ENCODE measurements at regions of chr11 and their contacts with region 1.

Region 1: GRCh38 chr11:100220801-100221200 is 466.3 kb upstream of the ARHGAP42 start:
- DNase-seq: no peak
- H3K4me3 ChIP-seq: no peak overlapping the region
- H3K27ac ChIP-seq: no peak overlapping the region
- H3K4me1 ChIP-seq: no peaks in the 10 kb centered on the region
- H3K27me3 ChIP-seq: no peaks in the 10 kb centered on the region
- CTCF ChIP-seq: no peak

Region 2: GRCh38 chr11:100151944-100152343 is 68.9 kb before region 1 on chr11:
- CTCF ChIA-PET with region 1: no interaction called
- POLR2A ChIA-PET with region 1: interaction called, 10 read pairs
- intact Hi-C with region 1: no loop called
- DNase-seq: peak in 1 of 2 experiments; percentile 26
- H3K4me3 ChIP-seq: no peak overlapping the region
- H3K27ac ChIP-seq: no peak overlapping the region
- H3K4me1 ChIP-seq: no peaks in the 10 kb centered on the region
- H3K27me3 ChIP-seq: no peaks in the 10 kb centered on the region
- CTCF ChIP-seq: no peak